ENCODE measurements at regions of chr7 and their contacts with region 1.

Region 1: GRCh38 chr7:132480534-132480933 is 95.7 kb downstream of the PLXNA4 start:
- DNase-seq: peak; percentile 83
- H3K4me3 ChIP-seq: no peak overlapping the region
- H3K27ac ChIP-seq: peak overlapping the region in 2 of 4 donors; percentile 14 to 43
- H3K4me1 ChIP-seq: peaks cover 0 to 11% (median 9%) of the 10 kb centered on the region in 4 donors
- H3K27me3 ChIP-seq: no peaks in the 10 kb centered on the region
- CTCF ChIP-seq: no peak
- EP300 ChIP-seq: no peak
- POLR2A ChIP-seq: no peak

Region 2: DNA sequence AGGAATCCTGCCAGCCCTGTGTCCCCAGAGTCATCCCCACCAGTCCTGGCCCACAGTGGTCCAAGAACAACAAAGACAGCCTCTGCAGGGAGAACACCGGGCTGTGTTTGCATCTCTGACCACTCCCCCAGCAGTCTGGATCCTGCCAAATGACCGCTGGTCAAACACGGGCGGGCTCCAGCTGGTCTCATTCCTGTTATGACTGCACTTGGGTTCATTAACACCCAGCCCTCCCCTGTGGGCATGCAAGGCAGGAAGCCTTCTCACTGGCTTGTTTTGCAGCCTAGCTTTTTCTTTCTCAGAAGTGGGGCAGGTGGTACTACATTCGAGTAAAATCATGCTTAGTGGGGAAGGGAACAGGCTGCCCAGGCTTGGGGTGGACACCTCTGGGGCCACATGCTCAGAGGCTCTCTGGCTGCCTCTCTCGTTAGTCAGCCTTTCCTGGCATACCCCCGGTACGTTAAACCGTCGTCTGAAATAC is 94.3 kb before region 1 on chr7:
- intact Hi-C with region 1: no loop called
- DNase-seq: no peak
- H3K4me3 ChIP-seq: no peak overlapping the region
- H3K27ac ChIP-seq: peak overlapping the region in 2 of 4 donors; percentile 57 to 67
- H3K4me1 ChIP-seq: peaks cover 0 to 15% (median 5%) of the 10 kb centered on the region in 4 donors
- H3K27me3 ChIP-seq: no peaks in the 10 kb centered on the region
- CTCF ChIP-seq: no peak
- EP300 ChIP-seq: no peak
- POLR2A ChIP-seq: no peak

Region 3: GRCh38 chr7:132402751-132403245 is 77.7 kb before region 1 on chr7:
- intact Hi-C with region 1: loop called (anchors 5 kb)
- DNase-seq: peak; percentile 91
- H3K4me3 ChIP-seq: no peak overlapping the region
- H3K27ac ChIP-seq: peak overlapping the region; percentile 71 to 84 (median 72)
- H3K4me1 ChIP-seq: peaks cover 0 to 29% (median 22%) of the 10 kb centered on the region in 4 donors
- H3K27me3 ChIP-seq: no peaks in the 10 kb centered on the region
- CTCF ChIP-seq: no peak
- EP300 ChIP-seq: peak; percentile 56 to 91 (median 68)
- POLR2A ChIP-seq: no peak